ENCODE measurements at regions of chr5 and their contacts with region 1.

Region 1: DNA sequence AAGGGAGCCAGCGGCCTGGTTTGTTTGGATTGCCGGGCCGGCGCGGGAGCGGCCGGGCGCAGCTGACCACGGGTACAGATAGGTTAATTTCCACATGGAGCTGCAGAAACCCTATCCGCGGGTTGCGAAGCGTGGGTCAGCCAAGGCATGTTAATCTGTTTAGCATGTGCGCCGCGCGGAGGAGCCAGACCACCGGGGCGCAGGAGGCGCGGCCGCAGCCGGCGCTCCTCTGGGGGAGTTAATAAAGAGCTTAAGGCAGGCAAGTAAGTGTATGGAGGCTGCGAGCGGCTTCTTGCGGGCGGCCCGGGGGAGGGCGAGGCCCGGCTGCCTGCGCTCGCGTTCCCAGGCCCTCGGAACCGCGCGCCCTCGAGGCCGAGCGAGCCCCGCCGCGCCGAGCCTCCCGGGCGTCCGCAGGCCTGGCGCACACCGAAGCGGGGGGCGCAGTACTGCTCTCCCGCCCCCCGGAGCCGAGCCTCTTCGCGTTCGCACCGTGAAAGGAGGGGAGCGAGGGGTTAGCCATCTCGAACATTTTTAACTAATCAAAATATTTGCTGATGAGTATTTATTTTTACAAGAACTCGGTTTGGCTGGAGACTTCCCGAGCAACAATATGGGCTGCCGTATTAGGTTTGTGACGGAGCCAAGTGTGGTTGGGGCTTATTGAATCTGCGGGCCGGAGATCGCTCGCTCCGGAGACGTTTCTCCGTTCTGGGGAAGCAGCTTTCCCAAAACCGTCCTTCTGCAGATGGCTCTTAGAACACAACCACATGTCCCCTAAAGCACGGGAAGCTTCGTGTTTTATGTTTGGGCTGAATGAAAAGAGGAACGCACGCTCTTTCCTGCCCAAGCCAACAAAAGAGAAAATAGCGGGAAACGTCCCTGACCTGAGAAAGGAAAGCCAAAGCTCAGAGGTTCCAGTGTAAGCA is 28.8 kb downstream of the FOXD1 start:
- DNase-seq: no peak
- H3K4me3 ChIP-seq: no peak overlapping the region
- H3K4me3 Mint-ChIP-seq: peak overlapping the region in 7 of 8 donors; percentile 21 to 78 (median 57)
- H3K27ac ChIP-seq: no peak overlapping the region
- H3K27ac Mint-ChIP-seq: no peak overlapping the region
- H3K4me1 ChIP-seq: peaks cover 15% of the 10 kb centered on the region
- H3K4me1 Mint-ChIP-seq: peaks cover 8 to 22% (median 15%) of the 10 kb centered on the region in 4 donors
- H3K27me3 ChIP-seq: peaks cover 61% of the 10 kb centered on the region
- H3K27me3 Mint-ChIP-seq: peaks cover 68 to 72% of the 10 kb centered on the region in 2 donors

Region 2: GRCh38 chr5:73387601-73388305 is 32.0 kb before region 1 on chr5:
- CTCF ChIA-PET with region 1: interaction called, 4 read pairs
- POLR2A ChIA-PET with region 1: no interaction called
- intact Hi-C with region 1: loop called (anchors 5 kb)
- DNase-seq: peak; percentile 80 to 85 (median 82)
- H3K4me3 ChIP-seq: peak overlapping the region; percentile 3 to 17
- H3K4me3 Mint-ChIP-seq: peak overlapping the region; percentile 56 to 81 (median 71)
- H3K27ac ChIP-seq: no peak overlapping the region
- H3K27ac Mint-ChIP-seq: peak overlapping the region in 6 of 7 donors; percentile 17 to 79 (median 49)
- H3K4me1 ChIP-seq: peaks cover 34% of the 10 kb centered on the region
- H3K4me1 Mint-ChIP-seq: peaks cover 20 to 45% (median 34%) of the 10 kb centered on the region in 4 donors
- H3K27me3 ChIP-seq: peaks cover 9% of the 10 kb centered on the region
- H3K27me3 Mint-ChIP-seq: peaks cover 6 to 10% of the 10 kb centered on the region in 2 donors

Region 3: GRCh38 chr5:73433982-73434342 is 14.2 kb after region 1 on chr5:
- CTCF ChIA-PET with region 1: no interaction called
- POLR2A ChIA-PET with region 1: no interaction called
- intact Hi-C with region 1: loop called (anchors 2 kb)
- DNase-seq: no peak
- H3K4me3 ChIP-seq: no peak overlapping the region
- H3K4me3 Mint-ChIP-seq: no peak overlapping the region
- H3K27ac ChIP-seq: no peak overlapping the region
- H3K27ac Mint-ChIP-seq: no peak overlapping the region
- H3K4me1 ChIP-seq: peaks cover 23% of the 10 kb centered on the region
- H3K4me1 Mint-ChIP-seq: peaks cover 2 to 15% (median 9%) of the 10 kb centered on the region in 4 donors
- H3K27me3 ChIP-seq: peaks cover 59% of the 10 kb centered on the region
- H3K27me3 Mint-ChIP-seq: peaks cover 44 to 56% of the 10 kb centered on the region in 2 donors